ENCODE measurements at regions of chrX and their contacts with region 1.

Region 1: DNA sequence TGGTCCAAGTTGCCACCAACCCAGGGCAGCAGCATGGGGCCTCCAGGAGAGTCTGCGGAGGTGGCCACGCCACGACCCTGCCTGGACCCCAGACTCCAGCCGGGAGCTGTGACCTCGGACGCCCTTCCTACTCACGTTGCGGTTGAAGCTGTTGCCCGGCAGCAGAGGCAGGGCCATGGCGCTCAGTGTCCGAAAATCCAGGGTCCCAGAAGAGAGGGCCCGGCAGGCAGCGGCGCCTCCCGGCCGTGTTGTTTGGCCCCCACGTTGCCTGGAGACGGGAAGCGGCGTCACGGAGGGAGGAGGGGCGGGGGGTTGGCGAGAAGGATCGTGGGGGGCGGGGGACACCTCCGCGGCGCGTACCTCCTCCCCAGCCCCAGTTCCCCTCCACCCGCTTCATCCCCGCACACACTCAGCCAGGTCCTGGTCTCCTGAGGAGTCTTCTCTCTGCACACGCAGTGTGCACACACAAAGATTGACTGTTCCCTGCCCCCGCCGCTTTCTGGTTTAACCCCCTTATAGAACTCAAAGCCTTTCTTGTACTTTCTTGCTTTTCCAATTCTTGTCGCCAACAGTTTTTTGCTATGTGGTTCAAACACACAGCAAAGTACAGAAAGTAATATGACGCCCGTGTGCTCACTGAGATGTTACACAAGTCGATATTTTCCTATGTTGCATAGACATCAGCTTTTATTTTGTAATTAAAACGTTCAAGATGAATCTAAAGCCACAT is at the start of gene EFHC2:
- DNase-seq: peak; percentile 62 to 73 (median 68)
- H3K4me3 ChIP-seq: peak within 1 kb of the TSS; percentile 55 to 57
- H3K4me3 Mint-ChIP-seq: peak within 1 kb of the TSS; percentile 85 to 96 (median 92)
- H3K27ac ChIP-seq: peak within 1 kb of the TSS; percentile 81
- H3K27ac Mint-ChIP-seq: peak within 1 kb of the TSS; percentile 94 to 97 (median 96)
- H3K4me1 ChIP-seq: peaks cover 14% of the 10 kb centered on the region
- H3K4me1 Mint-ChIP-seq: peaks cover 7 to 33% (median 23%) of the 10 kb centered on the region in 4 donors
- H3K27me3 ChIP-seq: no peaks in the 10 kb centered on the region
- H3K27me3 Mint-ChIP-seq: no peaks in the 10 kb centered on the region
- total RNA-seq, gene EFHC2: 0.94 to 1.9 TPM

Region 2: GRCh38 chrX:44101291-44101690 is 242.3 kb before region 1 on chrX:
- CTCF ChIA-PET with region 1: no interaction called
- POLR2A ChIA-PET with region 1: no interaction called
- intact Hi-C with region 1: no loop called
- DNase-seq: no peak
- H3K4me3 ChIP-seq: no peak overlapping the region
- H3K4me3 Mint-ChIP-seq: no peak overlapping the region
- H3K27ac ChIP-seq: no peak overlapping the region
- H3K27ac Mint-ChIP-seq: no peak overlapping the region
- H3K4me1 ChIP-seq: no peaks in the 10 kb centered on the region
- H3K4me1 Mint-ChIP-seq: no peaks in the 10 kb centered on the region
- H3K27me3 ChIP-seq: no peaks in the 10 kb centered on the region
- H3K27me3 Mint-ChIP-seq: peaks cover 0 to 2% of the 10 kb centered on the region in 2 donors

Region 3: DNA sequence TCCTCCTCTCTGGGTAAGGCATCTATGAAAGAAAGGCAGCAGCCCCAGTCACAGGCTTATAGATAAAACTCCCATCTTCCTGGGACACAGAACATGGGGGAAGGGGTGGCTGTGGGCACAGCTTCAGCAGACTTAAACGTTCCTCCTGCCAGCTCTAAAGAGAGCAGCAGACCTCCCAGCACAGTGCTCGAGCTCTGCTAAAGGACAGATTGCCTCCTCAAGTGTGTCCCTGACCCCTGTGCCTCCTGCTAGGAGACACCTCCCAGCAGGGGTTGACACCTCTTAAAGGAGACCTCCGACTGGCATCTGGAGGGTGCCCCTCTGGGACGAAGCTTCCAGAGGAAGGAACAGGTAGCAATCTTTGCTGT is 90.0 kb before region 1 on chrX:
- CTCF ChIA-PET with region 1: interaction called, 4 read pairs
- POLR2A ChIA-PET with region 1: interaction called, 13 read pairs
- intact Hi-C with region 1: no loop called
- DNase-seq: no peak
- H3K4me3 ChIP-seq: no peak overlapping the region
- H3K4me3 Mint-ChIP-seq: peak overlapping the region in 7 of 8 donors; percentile 75 to 83 (median 81)
- H3K27ac ChIP-seq: peak overlapping the region; percentile 46
- H3K27ac Mint-ChIP-seq: peak overlapping the region; percentile 80 to 96 (median 92)
- H3K4me1 ChIP-seq: peaks cover 31% of the 10 kb centered on the region
- H3K4me1 Mint-ChIP-seq: peaks cover 14 to 61% (median 43%) of the 10 kb centered on the region in 4 donors
- H3K27me3 ChIP-seq: no peaks in the 10 kb centered on the region
- H3K27me3 Mint-ChIP-seq: no peaks in the 10 kb centered on the region

Region 4: DNA sequence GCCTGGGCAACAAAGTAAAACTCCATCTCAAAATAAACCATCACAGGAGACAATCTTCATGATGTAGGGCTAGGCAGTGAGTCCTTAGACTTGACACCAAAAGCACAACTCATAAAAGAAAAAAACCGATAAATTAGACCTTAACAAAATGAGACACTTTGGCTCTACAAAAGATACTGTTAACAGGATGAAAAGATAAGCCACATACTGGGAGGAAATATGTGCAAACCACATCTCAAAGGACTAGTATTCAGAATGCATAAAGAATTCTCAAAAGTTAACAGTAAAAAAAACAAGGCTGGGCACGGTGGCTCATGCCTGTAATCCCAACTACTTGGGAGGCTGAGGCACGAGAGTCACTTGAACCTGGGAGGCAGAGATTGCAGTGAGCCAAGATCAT is 13.3 kb before region 1 on chrX:
- CTCF ChIA-PET with region 1: no interaction called
- POLR2A ChIA-PET with region 1: no interaction called
- intact Hi-C with region 1: loop called (anchors 2 kb)
- DNase-seq: peak in 4 of 5 donors; percentile 16 to 30 (median 24)
- H3K4me3 ChIP-seq: no peak overlapping the region
- H3K4me3 Mint-ChIP-seq: peak overlapping the region; percentile 26 to 82 (median 66)
- H3K27ac ChIP-seq: no peak overlapping the region
- H3K27ac Mint-ChIP-seq: peak overlapping the region; percentile 59 to 91 (median 80)
- H3K4me1 ChIP-seq: peaks cover 38% of the 10 kb centered on the region
- H3K4me1 Mint-ChIP-seq: peaks cover 20 to 49% (median 32%) of the 10 kb centered on the region in 4 donors
- H3K27me3 ChIP-seq: no peaks in the 10 kb centered on the region
- H3K27me3 Mint-ChIP-seq: no peaks in the 10 kb centered on the region

Region 5: GRCh38 chrX:44542567-44543325 is 199.2 kb after region 1 on chrX and contains the start of gene FUNDC1:
- CTCF ChIA-PET with region 1: no interaction called
- POLR2A ChIA-PET with region 1: no interaction called
- intact Hi-C with region 1: loop called (anchors 10 kb)
- DNase-seq: peak; percentile 90 to 92 (median 91)
- H3K4me3 ChIP-seq: peak within 1 kb of the TSS; percentile 52 to 66
- H3K4me3 Mint-ChIP-seq: peak within 1 kb of the TSS; percentile 90 to 96 (median 96)
- H3K27ac ChIP-seq: peak within 1 kb of the TSS; percentile 73
- H3K27ac Mint-ChIP-seq: peak within 1 kb of the TSS; percentile 82 to 97 (median 96)
- H3K4me1 ChIP-seq: peaks cover 26% of the 10 kb centered on the region
- H3K4me1 Mint-ChIP-seq: peaks cover 11 to 38% (median 33%) of the 10 kb centered on the region in 4 donors
- H3K27me3 ChIP-seq: no peaks in the 10 kb centered on the region
- H3K27me3 Mint-ChIP-seq: no peaks in the 10 kb centered on the region
- total RNA-seq, gene FUNDC1: 7.4 to 8.7 TPM